Left cardiac atrium (tissue), 4 donors: ENCODE measurements at regions of chr19 and their contacts with region 1.

Region 1: GRCh38 chr19:10332955-10333757 is at the start of gene RAVER1:
- DNase-seq: peak; percentile 99
- ATAC-seq: peak; percentile 94 to 95
- total RNA-seq, gene RAVER1: 14.0 to 19.3 TPM

Region 2: DNA sequence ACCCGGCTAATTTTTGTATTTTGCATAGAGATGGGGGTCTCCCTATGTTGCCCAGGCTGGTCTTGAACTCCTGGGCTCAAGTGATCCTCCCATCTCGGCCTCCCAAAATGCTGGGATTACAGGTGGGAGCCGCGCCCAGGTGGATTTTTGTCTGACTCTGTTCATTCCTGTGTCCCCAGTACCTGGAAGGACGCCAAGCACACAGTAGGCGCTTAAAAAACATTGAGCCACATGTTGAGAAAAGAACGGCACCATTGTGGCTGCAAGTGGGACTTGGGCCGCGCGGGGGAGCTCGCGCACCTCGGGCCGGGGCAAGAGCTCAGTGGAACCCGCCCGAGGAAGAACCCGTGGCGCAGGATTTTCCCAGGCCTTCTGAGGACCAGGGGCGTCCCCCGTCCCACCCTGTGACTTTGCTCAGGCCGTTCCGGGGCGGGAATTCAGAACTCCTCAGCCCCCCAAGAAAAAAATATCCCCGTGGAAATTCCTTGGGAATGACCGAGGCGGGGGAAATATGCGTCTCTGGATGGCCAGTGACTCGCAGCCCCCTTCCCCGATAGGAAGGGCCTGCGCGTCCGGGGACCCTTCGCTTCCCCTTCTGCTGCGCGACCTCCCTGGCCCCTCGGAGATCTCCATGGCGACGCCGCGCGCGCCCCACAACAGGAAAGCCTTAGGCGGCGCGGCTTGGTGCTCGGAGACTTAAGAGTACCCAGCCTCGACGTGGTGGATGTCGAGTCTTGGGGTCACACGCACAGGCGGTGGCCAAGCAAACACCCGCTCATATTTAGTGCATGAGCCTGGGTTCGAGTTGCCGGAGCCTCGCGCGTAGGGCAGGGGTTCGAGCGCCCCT is 63.6 kb before region 1 on chr19:
- intact Hi-C with region 1: loop called in 1 of 2 experiments (anchors 5 kb)
- DNase-seq: peak; percentile 92
- ATAC-seq: peak; percentile 80 to 83

Region 3: DNA sequence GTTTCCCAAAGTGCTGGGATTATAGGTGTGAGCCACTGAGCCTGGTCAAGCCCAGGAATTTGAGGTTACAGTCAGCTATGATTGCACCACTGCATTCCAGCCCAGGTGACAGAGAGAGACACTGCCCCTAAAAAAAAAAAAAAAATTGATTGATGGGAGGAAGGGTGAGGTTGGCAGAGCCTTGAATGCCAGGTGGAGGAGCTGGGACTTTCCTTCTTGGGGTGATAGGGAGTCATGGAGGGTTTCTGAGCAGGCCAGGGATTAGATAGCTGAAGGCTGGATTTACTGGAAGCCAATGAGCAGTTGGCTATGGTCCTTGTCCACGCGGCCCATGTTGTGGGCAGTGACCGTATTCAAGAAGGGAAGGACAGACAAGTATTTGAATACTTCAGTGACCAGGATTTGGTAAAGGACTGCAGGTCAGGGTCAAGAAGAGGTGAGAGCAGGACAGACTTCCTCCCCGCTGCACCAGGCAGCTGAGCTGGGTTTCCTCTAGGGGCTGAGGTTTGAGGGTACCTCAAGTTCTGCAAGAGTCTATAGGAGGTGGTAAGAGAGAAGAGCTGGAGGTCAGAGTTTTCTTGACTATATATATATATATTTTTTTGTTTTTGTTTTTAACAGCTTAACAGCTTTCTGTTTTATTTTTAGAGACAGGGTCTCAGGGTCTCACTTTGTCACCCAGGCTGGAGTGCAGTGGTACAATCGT is 53.3 kb before region 1 on chr19:
- intact Hi-C with region 1: no loop called
- DNase-seq: no peak
- ATAC-seq: no peak

Region 4: GRCh38 chr19:10379880-10380312 is 46.7 kb after region 1 on chr19:
- intact Hi-C with region 1: loop called in 1 of 2 experiments (anchors 5 kb)
- DNase-seq: no peak
- ATAC-seq: peak in 1 of 2 donors; percentile 1